ENCODE measurements at regions of chr17 and their contacts with region 1.

Region 1: DNA sequence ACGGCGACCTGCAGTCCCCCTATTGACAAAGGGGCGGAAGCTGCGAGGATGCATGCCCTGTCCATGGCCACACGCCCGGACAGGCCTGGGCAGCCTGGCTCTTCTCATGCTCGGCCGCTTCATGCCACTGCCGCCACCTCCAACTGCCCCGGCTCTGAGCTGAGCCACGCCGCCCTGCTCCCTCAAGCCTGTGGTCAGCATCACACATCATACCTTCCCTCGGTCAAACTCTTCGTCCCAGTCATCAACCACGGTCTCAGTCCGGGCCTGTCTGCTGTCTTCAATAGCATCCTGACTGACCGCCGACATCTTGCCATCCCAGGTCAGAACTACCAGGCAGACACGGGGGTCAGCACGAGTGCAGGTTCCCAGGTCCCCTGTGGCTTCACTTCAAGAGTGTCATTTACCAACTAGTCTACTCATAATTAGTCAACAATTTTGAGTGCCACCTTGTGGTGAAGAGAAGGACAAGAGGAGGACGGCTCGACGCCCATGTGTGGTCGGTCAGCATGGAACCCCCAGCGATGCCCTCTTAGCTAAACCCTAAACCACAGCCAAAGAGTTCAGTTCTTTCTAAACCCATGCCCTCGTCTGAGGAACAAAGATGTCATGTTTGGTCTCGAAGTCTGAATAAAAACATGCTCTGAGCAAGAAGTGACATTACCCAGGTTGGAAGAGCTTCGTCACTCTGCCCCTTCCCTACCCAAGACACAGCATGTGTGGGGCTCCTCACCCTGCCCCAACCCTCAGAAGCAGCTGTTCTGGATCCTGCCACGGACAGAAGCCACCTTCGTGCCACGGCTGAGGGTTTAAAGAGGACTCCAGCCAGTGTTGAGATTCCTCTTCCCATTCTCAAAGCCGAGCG is 16.9 kb upstream of the CYTH1 start:
- DNase-seq: peak; percentile 68
- ATAC-seq: peak; percentile 56
- H3K4me3 ChIP-seq: no peak overlapping the region
- H3K4me3 Mint-ChIP-seq: no peak overlapping the region
- H3K27ac ChIP-seq: no peak overlapping the region
- H3K27ac Mint-ChIP-seq: peak overlapping the region; percentile 57
- H3K4me1 ChIP-seq: peaks cover 6 to 8% of the 10 kb centered on the region in 2 donors
- H3K4me1 Mint-ChIP-seq: peaks cover 12% of the 10 kb centered on the region
- H3K27me3 ChIP-seq: no peaks in the 10 kb centered on the region
- H3K27me3 Mint-ChIP-seq: no peaks in the 10 kb centered on the region
- CTCF ChIP-seq: peak; percentile 59

Region 2: GRCh38 chr17:78442648-78443128 is 356.2 kb before region 1 on chr17:
- CTCF ChIA-PET with region 1: interaction called, 13 read pairs
- POLR2A ChIA-PET with region 1: no interaction called
- intact Hi-C with region 1: no loop called
- DNase-seq: no peak
- ATAC-seq: no peak
- H3K4me3 ChIP-seq: no peak overlapping the region
- H3K4me3 Mint-ChIP-seq: no peak overlapping the region
- H3K27ac ChIP-seq: no peak overlapping the region
- H3K27ac Mint-ChIP-seq: no peak overlapping the region
- H3K4me1 ChIP-seq: no peaks in the 10 kb centered on the region
- H3K4me1 Mint-ChIP-seq: no peaks in the 10 kb centered on the region
- H3K27me3 ChIP-seq: peaks cover 0 to 4% (median 0%) of the 10 kb centered on the region in 4 experiments
- H3K27me3 Mint-ChIP-seq: peaks cover 8% of the 10 kb centered on the region
- CTCF ChIP-seq: no peak

Region 3: GRCh38 chr17:78497115-78497540 is 301.8 kb before region 1 on chr17:
- CTCF ChIA-PET with region 1: interaction called, 10 read pairs
- POLR2A ChIA-PET with region 1: no interaction called
- intact Hi-C with region 1: no loop called
- DNase-seq: peak; percentile 66
- ATAC-seq: peak; percentile 51
- H3K4me3 ChIP-seq: no peak overlapping the region
- H3K4me3 Mint-ChIP-seq: no peak overlapping the region
- H3K27ac ChIP-seq: no peak overlapping the region
- H3K27ac Mint-ChIP-seq: no peak overlapping the region
- H3K4me1 ChIP-seq: no peaks in the 10 kb centered on the region
- H3K4me1 Mint-ChIP-seq: no peaks in the 10 kb centered on the region
- H3K27me3 ChIP-seq: peaks cover 0 to 3% (median 0%) of the 10 kb centered on the region in 4 experiments
- H3K27me3 Mint-ChIP-seq: peaks cover 8% of the 10 kb centered on the region
- CTCF ChIP-seq: peak; percentile 60

Region 4: GRCh38 chr17:78890498-78890897 is 91.6 kb after region 1 on chr17:
- CTCF ChIA-PET with region 1: no interaction called
- POLR2A ChIA-PET with region 1: no interaction called
- intact Hi-C with region 1: no loop called
- DNase-seq: peak; percentile 82
- ATAC-seq: peak; percentile 64
- H3K4me3 ChIP-seq: peak overlapping the region in 3 of 5 experiments; percentile 5 to 71 (median 56)
- H3K4me3 Mint-ChIP-seq: peak overlapping the region; percentile 72
- H3K27ac ChIP-seq: peak overlapping the region; percentile 93 to 96
- H3K27ac Mint-ChIP-seq: peak overlapping the region; percentile 93
- H3K4me1 ChIP-seq: peaks cover 41 to 53% of the 10 kb centered on the region in 2 donors
- H3K4me1 Mint-ChIP-seq: peaks cover 58% of the 10 kb centered on the region
- H3K27me3 ChIP-seq: no peaks in the 10 kb centered on the region
- H3K27me3 Mint-ChIP-seq: no peaks in the 10 kb centered on the region
- CTCF ChIP-seq: no peak

Region 5: DNA sequence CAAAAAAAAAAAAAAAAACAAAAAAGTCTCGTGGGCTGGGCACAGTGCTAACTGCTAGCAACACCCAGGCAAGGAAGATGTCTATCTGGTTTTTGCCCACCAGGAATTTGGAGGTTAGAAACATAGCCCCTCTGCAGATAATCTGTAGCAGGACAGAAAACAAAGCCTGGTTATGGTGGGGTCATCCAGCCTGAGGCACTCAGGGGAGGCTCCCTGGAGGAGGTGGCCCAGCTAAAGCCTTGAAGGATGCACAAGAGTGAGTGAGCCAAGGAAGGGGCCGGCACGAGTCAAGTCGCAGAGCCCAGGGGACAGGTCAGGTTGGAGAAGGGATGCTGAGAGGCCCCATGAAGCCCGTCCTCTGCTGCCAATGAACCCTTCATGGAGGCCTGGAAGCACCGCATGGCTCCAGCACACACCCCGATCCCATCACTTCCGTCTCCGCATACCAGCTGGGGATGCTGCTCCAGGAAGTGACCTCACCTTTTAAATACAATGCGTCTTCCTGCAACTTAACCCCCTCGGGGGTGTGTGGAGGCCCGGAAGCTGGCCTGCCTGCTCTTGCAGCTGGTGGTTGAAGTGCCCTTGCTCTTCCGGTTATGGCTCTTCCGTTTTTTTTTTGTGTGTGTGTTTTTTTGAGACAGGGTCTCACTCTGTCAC is 362.2 kb after region 1 on chr17:
- CTCF ChIA-PET with region 1: no interaction called
- POLR2A ChIA-PET with region 1: no interaction called
- intact Hi-C with region 1: no loop called
- DNase-seq: no peak
- ATAC-seq: no peak
- H3K4me3 ChIP-seq: no peak overlapping the region
- H3K4me3 Mint-ChIP-seq: no peak overlapping the region
- H3K27ac ChIP-seq: no peak overlapping the region
- H3K27ac Mint-ChIP-seq: no peak overlapping the region
- H3K4me1 ChIP-seq: peaks cover 0 to 6% of the 10 kb centered on the region in 2 donors
- H3K4me1 Mint-ChIP-seq: peaks cover 4% of the 10 kb centered on the region
- H3K27me3 ChIP-seq: no peaks in the 10 kb centered on the region
- H3K27me3 Mint-ChIP-seq: peaks cover 4% of the 10 kb centered on the region
- CTCF ChIP-seq: no peak